PC-3 (cell line): ENCODE measurements at regions of chr6 and their contacts with region 1.

Region 1: DNA sequence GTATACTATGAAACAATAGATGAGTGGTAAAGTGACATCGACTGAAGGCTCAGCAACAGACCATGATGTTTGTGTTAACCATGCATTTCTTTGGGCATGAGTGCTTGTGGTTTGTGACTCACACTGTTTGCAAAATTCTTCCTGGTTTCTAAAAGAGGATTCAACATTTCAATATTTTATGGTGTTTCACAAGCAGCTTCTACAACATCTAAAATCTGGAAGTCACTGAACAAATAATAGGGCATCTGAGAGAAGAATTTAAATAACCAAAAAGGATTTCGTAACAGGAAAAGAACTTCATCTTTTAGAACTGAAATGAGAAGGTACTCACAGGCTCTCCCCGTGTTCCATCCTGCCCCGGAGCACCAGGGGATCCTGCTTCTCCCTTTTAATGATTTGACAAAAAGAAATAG is 146.2 kb downstream of the COL21A1 start:
- DNase-seq: peak; percentile 95
- ATAC-seq: peak; percentile 99
- H3K4me3 ChIP-seq: no peak overlapping the region
- H3K27ac ChIP-seq: peak overlapping the region; percentile 83
- H3K4me1 ChIP-seq: peaks cover 26% of the 10 kb centered on the region
- H3K27me3 ChIP-seq: no peaks in the 10 kb centered on the region
- CTCF ChIP-seq: no peak

Region 2: DNA sequence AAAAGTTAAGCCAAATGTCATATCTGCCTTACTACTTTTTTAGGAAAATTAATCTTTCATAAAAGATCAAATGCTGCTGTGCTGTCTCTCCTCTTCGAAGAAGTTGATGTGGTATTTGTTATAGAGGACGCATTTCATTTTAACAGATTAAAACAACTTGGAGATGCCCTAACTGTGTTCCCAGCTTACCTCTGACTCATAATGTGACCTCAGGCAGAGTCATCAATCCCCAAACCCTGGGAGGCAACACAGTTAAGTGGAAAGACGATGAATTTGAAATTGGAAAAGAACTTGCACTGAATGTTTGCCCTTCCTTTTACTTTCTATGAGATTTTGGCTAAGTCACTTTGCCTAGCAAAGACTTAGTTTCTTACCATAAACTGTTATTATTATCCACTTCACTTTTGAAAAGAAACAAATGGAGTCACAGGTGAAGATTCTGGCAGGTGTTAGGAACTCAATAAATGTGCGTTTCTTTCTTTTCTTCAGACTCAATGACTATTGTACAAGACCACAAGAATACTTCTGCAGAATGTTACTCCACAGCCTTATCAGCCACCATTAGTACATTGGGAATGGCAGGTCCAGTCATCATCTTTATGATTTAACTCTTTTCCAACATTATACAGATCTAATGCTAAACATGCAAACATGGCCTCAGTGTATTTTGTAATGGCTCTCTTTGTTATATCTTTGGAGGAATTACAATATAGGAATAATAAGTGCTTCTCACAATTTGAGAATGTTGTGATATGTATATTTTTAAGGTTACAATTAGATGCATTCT is 43.6 kb after region 1 on chr6:
- CTCF ChIA-PET with region 1: no interaction called
- POLR2A ChIA-PET with region 1: no interaction called
- intact Hi-C with region 1: no loop called
- DNase-seq: peak; percentile 85
- ATAC-seq: peak; percentile 93
- H3K4me3 ChIP-seq: peak overlapping the region; percentile 25; the same call in 1 of the 2 replicates
- H3K27ac ChIP-seq: peak overlapping the region; percentile 83
- H3K4me1 ChIP-seq: peaks cover 25% of the 10 kb centered on the region
- H3K27me3 ChIP-seq: no peaks in the 10 kb centered on the region
- CTCF ChIP-seq: no peak

Region 3: GRCh38 chr6:56168596-56168995 is 67.4 kb after region 1 on chr6:
- CTCF ChIA-PET with region 1: no interaction called
- POLR2A ChIA-PET with region 1: no interaction called
- intact Hi-C with region 1: loop called (anchors 1 kb)
- DNase-seq: peak; percentile 36
- ATAC-seq: peak; percentile 29
- H3K4me3 ChIP-seq: no peak overlapping the region
- H3K27ac ChIP-seq: peak overlapping the region; percentile 52
- H3K4me1 ChIP-seq: peaks cover 12% of the 10 kb centered on the region
- H3K27me3 ChIP-seq: no peaks in the 10 kb centered on the region
- CTCF ChIP-seq: no peak